ENCODE measurements at regions of chr7 and their contacts with region 1.

Region 1: DNA sequence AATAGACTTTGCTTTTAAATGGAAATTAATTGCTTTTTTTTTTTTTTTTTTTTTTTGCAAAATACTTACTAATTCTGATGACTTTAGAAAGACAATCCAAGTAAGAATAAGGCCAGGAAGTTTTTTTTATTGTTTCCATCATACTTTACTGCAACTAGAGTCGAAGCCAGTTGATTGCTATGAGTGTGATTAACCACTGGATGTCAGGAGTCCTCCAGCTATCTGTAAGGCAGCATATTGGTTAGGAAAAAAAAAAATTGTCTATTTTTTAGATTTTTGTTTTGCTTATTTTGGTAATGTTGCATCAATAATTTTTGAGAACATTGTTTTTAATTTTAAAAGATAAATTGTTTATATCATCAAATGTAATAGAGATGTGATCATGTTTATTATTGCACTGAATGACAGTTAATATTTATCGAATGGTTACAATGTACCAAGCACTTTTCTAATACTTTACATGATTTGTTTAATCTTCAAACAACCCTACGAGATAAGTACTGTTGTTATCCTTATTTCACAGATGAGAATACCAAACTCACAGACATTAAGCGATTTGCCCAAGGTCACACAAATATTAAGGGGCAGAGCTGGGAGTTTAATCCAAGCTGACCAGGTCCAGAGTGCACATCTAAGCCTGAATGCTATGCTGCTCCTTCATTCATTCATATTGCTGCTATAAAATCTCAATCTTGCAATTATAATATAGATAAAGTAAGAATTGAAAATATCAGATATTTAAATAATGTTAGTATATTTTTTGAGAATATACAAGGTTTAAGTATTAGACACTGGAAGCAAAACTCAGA is 19.9 kb upstream of the LMOD2 start:
- DNase-seq: no peak
- H3K4me3 ChIP-seq: no peak overlapping the region
- H3K27ac ChIP-seq: no peak overlapping the region
- H3K4me1 ChIP-seq: no peaks in the 10 kb centered on the region
- H3K27me3 ChIP-seq: no peaks in the 10 kb centered on the region
- CTCF ChIP-seq: peak in 2 of 3 experiments; percentile 52 to 65; a peak in 3 of 4 replicates
- EP300 ChIP-seq: no peak
- POLR2A ChIP-seq: no peak
- RAD21 ChIP-seq: peak; percentile 91 to 92

Region 2: GRCh38 chr7:123615344-123615743 is 20.4 kb before region 1 on chr7:
- CTCF ChIA-PET with region 1: interaction called, 10 read pairs
- POLR2A ChIA-PET with region 1: no interaction called
- DNase-seq: no peak
- H3K4me3 ChIP-seq: no peak overlapping the region
- H3K27ac ChIP-seq: no peak overlapping the region
- H3K4me1 ChIP-seq: no peaks in the 10 kb centered on the region
- H3K27me3 ChIP-seq: no peaks in the 10 kb centered on the region
- CTCF ChIP-seq: no peak
- EP300 ChIP-seq: no peak
- POLR2A ChIP-seq: no peak
- RAD21 ChIP-seq: no peak

Region 3: DNA sequence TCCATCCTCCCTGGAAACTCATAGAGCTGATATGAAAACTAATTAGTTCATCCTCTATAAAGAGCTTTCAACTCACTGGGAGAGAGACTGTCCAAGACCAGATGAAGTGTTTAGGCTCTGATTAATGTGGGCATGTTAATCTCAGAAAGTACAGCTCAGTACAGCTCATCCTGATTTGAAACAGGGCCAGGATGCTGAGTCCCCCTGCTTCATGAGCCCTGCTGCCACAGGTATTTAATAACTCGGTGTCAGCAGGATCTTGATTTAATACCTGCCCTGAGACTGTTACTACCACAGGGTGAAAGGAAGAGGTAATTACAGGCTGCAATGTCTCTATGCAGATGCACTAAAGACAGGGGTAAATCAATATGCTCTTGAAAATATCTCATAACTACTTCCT is 30.7 kb after region 1 on chr7:
- CTCF ChIA-PET with region 1: interaction called, 10 read pairs
- POLR2A ChIA-PET with region 1: no interaction called
- DNase-seq: no peak
- H3K4me3 ChIP-seq: no peak overlapping the region
- H3K27ac ChIP-seq: no peak overlapping the region
- H3K4me1 ChIP-seq: 0 out of 7 replicates have a peak, but pooled peaks cover 0 to 3% (median 0%) of the 10 kb centered on the region in 4 experiments
- H3K27me3 ChIP-seq: no peaks in the 10 kb centered on the region
- CTCF ChIP-seq: no peak
- EP300 ChIP-seq: no peak
- POLR2A ChIP-seq: no peak
- RAD21 ChIP-seq: no peak

Region 4: DNA sequence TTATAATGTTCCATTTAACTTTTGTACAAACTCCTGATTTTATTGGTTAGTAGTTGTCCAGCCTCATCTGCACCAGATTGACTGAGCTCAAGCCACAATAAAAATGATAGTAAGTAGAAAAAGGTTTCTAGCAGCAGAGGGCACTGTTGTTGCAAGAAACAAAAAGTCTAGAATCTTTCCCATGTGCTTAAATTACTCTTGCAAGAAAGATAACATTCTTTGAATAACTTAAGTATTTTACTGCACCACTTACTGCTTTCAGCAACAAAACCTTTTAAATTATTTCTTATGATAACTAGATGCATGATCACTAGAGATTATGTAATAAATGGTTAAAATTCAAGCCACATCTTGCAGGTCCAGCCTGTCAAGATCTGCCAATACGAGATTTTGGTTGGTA is 46.9 kb after region 1 on chr7:
- CTCF ChIA-PET with region 1: interaction called, 20 read pairs
- POLR2A ChIA-PET with region 1: no interaction called
- DNase-seq: no peak
- H3K4me3 ChIP-seq: no peak overlapping the region
- H3K27ac ChIP-seq: no peak overlapping the region
- H3K4me1 ChIP-seq: no peaks in the 10 kb centered on the region
- H3K27me3 ChIP-seq: peaks cover 0 to 1% (median 0%) of the 10 kb centered on the region in 4 experiments; a peak in 1 of 7 replicates
- CTCF ChIP-seq: peak in 2 of 3 experiments; percentile 38 to 40; a peak in 2 of 4 replicates
- EP300 ChIP-seq: no peak
- POLR2A ChIP-seq: no peak
- RAD21 ChIP-seq: peak; percentile 63 to 67

Region 5: GRCh38 chr7:123705211-123705901 is 69.6 kb after region 1 on chr7:
- CTCF ChIA-PET with region 1: interaction called, 11 read pairs
- POLR2A ChIA-PET with region 1: interaction called, 3 read pairs
- DNase-seq: no peak
- H3K4me3 ChIP-seq: no peak overlapping the region
- H3K27ac ChIP-seq: no peak overlapping the region
- H3K4me1 ChIP-seq: no peaks in the 10 kb centered on the region; a peak in 1 of 7 replicates
- H3K27me3 ChIP-seq: no peaks in the 10 kb centered on the region
- CTCF ChIP-seq: no peak
- EP300 ChIP-seq: no peak
- POLR2A ChIP-seq: no peak
- RAD21 ChIP-seq: no peak

Region 6: GRCh38 chr7:123865517-123866117 is 229.9 kb after region 1 on chr7:
- CTCF ChIA-PET with region 1: interaction called, 26 read pairs
- POLR2A ChIA-PET with region 1: no interaction called
- DNase-seq: no peak
- H3K4me3 ChIP-seq: no peak overlapping the region
- H3K27ac ChIP-seq: no peak overlapping the region
- H3K4me1 ChIP-seq: peaks cover 0 to 2% (median 1%) of the 10 kb centered on the region in 4 experiments; a peak in 1 of 7 replicates
- H3K27me3 ChIP-seq: no peaks in the 10 kb centered on the region
- CTCF ChIP-seq: peak in 2 of 3 experiments; percentile 61 to 68; a peak in 3 of 4 replicates
- EP300 ChIP-seq: no peak
- POLR2A ChIP-seq: no peak
- RAD21 ChIP-seq: peak; percentile 68 to 69

Measured in H1 (cell line).